Panc1 (cell line): ENCODE measurements at regions of chr18 and their contacts with region 1.

Region 1: GRCh38 chr18:2903006-2903405 is 56.2 kb downstream of the EMILIN2 start:
- DNase-seq: no peak
- ATAC-seq: no peak
- H3K4me3 ChIP-seq: no peak overlapping the region
- H3K27ac ChIP-seq: no peak overlapping the region
- H3K4me1 ChIP-seq: no peaks in the 10 kb centered on the region
- H3K27me3 ChIP-seq: peaks cover 8% of the 10 kb centered on the region
- CTCF ChIP-seq: no peak

Region 2: GRCh38 chr18:1895456-1896185 is 1007.4 kb before region 1 on chr18:
- CTCF ChIA-PET with region 1: no interaction called
- POLR2A ChIA-PET with region 1: no interaction called
- in situ Hi-C with region 1: no loop called
- intact Hi-C with region 1: no loop called
- DNase-seq: no peak
- ATAC-seq: no peak
- H3K4me3 ChIP-seq: no peak overlapping the region
- H3K27ac ChIP-seq: no peak overlapping the region
- H3K4me1 ChIP-seq: no peaks in the 10 kb centered on the region
- H3K27me3 ChIP-seq: no peaks in the 10 kb centered on the region
- CTCF ChIP-seq: no peak

Region 3: DNA sequence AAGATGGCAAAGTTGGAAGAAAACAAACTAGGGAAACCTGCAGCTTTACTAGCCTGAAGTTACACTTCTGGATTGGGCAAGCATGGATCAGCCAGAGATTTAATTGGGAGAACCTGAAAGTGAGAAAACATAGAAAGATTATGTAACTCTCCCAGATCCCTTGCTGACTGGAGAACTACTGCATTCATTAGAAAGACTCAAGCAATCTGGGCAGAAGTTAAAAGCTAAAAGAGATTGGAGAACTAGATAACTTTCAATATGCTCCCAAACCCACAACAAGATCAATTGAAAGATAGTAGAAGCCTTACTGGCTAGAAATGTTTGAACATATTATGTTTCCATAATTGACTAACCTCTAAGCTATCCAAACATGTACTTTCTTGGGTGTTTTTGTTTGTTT is 517.6 kb before region 1 on chr18:
- CTCF ChIA-PET with region 1: no interaction called
- POLR2A ChIA-PET with region 1: no interaction called
- in situ Hi-C with region 1: no loop called
- intact Hi-C with region 1: no loop called
- DNase-seq: no peak
- ATAC-seq: no peak
- H3K4me3 ChIP-seq: no peak overlapping the region
- H3K27ac ChIP-seq: no peak overlapping the region
- H3K4me1 ChIP-seq: no peaks in the 10 kb centered on the region
- H3K27me3 ChIP-seq: no peaks in the 10 kb centered on the region
- CTCF ChIP-seq: no peak

Region 4: DNA sequence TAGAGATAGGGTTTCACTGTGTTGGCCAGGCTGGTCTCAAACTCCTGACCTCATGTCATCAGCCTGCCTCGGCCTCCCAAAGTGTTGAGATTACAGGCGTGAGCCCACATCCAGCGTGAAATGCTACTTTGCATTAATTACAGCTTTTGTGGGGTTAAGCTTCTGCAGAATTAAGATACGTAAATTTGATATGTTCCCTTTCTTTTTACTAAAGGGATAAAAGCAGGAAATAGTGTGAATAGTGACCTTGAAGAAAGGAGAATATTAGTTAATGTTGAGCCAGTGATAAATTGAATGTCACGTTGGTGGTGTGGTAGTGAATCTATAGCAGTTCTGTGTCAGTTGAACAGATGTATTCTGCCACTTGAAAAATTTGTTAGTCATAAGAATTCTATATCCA is 230.6 kb before region 1 on chr18:
- CTCF ChIA-PET with region 1: no interaction called
- POLR2A ChIA-PET with region 1: no interaction called
- in situ Hi-C with region 1: no loop called
- intact Hi-C with region 1: no loop called
- DNase-seq: no peak
- ATAC-seq: no peak
- H3K4me3 ChIP-seq: no peak overlapping the region
- H3K27ac ChIP-seq: no peak overlapping the region
- H3K4me1 ChIP-seq: no peaks in the 10 kb centered on the region
- H3K27me3 ChIP-seq: no peaks in the 10 kb centered on the region
- CTCF ChIP-seq: no peak

Region 5: DNA sequence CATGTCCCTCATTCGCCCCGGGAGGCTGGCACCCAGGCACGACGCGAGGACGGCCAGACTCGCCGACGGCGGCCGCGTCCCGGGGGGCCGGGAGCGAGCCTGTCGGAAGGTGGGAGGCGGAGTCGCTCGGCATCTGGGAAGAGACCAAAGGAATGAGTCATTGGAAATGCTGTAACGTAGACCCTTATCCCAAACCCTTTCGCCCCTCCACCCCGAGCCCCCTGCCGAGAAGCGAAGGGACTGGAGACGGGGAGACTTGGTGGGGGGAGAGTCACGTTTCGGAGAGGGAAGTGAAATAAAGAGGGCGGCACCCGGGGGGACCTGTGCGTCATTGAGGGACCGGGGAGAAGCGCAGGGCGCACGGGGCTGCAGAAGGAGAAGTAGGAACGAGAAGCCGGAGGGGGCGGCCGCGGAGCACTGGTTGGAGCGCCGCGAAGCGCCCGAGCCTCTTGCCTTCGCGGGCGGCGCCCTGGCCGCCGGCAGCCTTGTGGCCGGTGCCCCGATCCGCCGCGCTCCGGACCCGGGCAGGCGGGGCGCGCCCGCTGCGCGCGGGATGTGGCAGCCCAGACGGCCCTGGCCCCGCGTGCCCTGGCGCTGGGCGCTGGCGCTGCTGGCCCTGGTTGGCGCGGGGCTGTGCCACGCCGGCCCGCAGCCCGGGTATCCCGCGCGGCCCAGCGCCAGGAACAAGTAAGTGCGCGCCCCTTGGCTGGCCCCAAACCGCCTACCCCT is 56.2 kb before region 1 on chr18 and contains the start of gene EMILIN2:
- CTCF ChIA-PET with region 1: no interaction called
- POLR2A ChIA-PET with region 1: no interaction called
- in situ Hi-C with region 1: no loop called
- intact Hi-C with region 1: no loop called
- DNase-seq: no peak
- ATAC-seq: peak; percentile 29
- H3K4me3 ChIP-seq: peak within 1 kb of the TSS; percentile 29 to 42
- H3K27ac ChIP-seq: no peak within 1 kb of the TSS
- H3K4me1 ChIP-seq: peaks cover 3% of the 10 kb centered on the region; the same call in 1 of the 2 replicates
- H3K27me3 ChIP-seq: peaks cover 40% of the 10 kb centered on the region
- CTCF ChIP-seq: no peak; the same call in 1 of the 2 replicates
- total RNA-seq, gene EMILIN2: 18.3 TPM

Region 6: GRCh38 chr18:2889761-2890192 is 13.2 kb before region 1 on chr18:
- CTCF ChIA-PET with region 1: no interaction called
- POLR2A ChIA-PET with region 1: interaction called, 10 read pairs
- in situ Hi-C with region 1: no loop called
- intact Hi-C with region 1: no loop called
- DNase-seq: no peak
- ATAC-seq: no peak
- H3K4me3 ChIP-seq: no peak overlapping the region
- H3K27ac ChIP-seq: no peak overlapping the region
- H3K4me1 ChIP-seq: no peaks in the 10 kb centered on the region
- H3K27me3 ChIP-seq: peaks cover 3% of the 10 kb centered on the region; the same call in 1 of the 2 replicates
- CTCF ChIP-seq: no peak